ENCODE measurements at regions of chr14 and their contacts with region 1.

Region 1: DNA sequence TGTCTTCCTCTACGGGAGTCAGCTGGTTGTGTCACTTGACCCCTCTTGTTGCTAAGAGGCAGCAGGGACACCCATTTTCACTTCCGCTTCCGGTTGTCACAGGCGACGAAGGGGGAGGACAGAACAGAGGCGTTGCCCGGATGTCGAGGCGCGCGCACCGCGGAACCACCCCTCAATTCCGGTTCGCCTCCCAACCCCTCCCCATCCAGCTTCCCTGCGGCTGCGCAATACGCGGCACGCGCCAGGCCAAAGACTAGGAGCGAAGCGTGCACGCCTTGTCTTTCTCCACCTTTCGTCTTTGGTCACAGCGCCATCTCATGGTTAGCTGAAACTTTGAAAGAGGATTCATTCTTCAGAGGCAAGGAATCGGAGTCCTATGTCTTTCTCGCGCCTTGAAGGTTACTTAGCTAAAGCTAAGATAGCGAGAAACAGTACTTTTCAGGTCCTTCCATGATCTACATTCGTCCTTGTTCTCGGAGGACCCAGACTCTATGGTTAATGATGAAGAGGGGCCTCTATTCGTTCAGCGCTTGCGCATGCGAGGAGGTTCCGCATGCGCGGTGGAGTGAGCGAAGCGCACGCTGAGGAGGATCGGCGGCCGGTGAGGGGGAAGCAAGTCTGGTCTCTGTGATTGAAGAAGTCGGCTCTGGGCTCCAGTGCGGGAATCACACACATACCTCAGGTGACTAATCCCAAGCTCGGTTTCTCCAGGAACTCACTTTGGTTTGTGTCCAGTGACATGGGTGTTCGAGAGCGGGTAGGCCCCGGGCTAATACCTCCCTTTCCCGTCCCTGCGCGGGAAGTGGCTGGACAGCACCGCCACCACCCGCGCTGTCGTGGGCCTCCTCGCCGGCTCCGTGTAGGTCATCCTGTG is at the starts of genes ATP6V1D and EIF2S1:
- DNase-seq: peak; percentile 98
- H3K4me3 ChIP-seq: peak within 1 kb of the TSS; percentile 97
- H3K27ac ChIP-seq: peak within 1 kb of the TSS; percentile 99
- H3K27me3 ChIP-seq: no peaks in the 10 kb centered on the region
- CTCF ChIP-seq: peak; percentile 98
- polyA plus RNA-seq, gene ATP6V1D: 86.4 and 107 TPM in 2 replicates
- polyA plus RNA-seq, gene EIF2S1: 105 and 149 TPM in 2 replicates

Region 2: DNA sequence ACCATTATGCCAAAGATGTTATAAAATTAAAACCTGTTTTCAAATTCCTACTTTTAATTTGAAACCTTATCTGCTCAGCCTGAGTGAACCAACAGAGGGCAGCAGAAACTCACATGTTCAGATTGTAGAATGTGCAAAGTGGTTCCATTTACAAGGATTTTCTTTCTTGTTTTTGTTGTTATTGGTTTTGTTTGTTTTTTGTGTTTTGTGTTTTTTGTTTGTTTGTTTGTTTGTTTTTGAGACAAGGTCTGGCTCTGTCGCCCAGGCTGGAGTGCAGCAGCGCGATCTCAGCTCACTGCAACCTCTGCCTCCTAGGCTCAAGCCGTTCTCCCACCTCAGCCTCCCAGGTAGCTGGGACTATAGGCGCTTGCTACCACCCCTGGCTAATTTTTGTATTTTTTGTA is 193.6 kb before region 1 on chr14:
- CTCF ChIA-PET with region 1: interaction called, 24 read pairs
- POLR2A ChIA-PET with region 1: no interaction called
- DNase-seq: peak; percentile 27
- H3K4me3 ChIP-seq: no peak overlapping the region
- H3K27ac ChIP-seq: no peak overlapping the region
- H3K27me3 ChIP-seq: no peaks in the 10 kb centered on the region
- CTCF ChIP-seq: peak; percentile 89

Region 3: DNA sequence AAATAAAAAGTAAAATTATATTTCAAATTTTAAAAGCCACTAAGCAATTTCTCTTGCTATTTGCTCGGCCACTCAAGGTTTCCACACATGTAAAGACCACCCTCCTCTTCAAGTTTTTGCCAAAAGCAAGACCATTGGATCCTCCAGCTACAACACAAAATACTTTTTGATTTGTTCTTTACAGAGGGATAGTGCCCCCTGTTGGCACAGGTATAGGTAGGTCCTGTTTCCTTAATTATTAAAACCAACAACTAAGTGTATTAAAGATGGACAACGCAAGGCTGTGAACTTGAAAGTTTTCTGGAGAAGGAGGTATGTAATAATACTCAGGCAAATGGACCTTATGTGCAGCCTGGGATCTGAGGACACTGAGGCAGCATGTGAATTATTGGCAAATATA is 24.2 kb before region 1 on chr14:
- CTCF ChIA-PET with region 1: interaction called, 24 read pairs
- POLR2A ChIA-PET with region 1: interaction called, 3 read pairs
- DNase-seq: no peak
- H3K4me3 ChIP-seq: no peak overlapping the region
- H3K27ac ChIP-seq: no peak overlapping the region
- H3K27me3 ChIP-seq: no peaks in the 10 kb centered on the region
- CTCF ChIP-seq: peak; percentile 48

Region 4: DNA sequence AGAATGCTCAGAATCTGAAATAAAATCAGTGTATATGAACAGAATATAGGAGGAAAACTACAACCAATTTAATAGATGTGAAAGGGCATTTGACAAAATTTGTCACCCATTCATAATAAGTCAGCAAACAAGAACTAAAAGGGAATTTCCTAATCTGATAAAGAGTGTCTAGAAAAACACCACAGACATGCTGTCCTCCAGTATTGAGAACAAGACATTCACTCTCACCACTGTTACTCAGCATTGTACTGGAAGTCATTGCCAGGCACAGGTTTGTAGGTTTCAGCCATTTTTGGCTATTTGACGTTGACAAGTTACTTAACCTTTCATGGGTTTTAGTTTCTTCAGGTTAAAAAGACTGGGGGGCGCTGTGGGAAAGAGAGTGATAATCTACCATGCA is 13.3 kb after region 1 on chr14:
- CTCF ChIA-PET with region 1: interaction called, 27 read pairs
- POLR2A ChIA-PET with region 1: no interaction called
- DNase-seq: no peak
- H3K4me3 ChIP-seq: no peak overlapping the region
- H3K27ac ChIP-seq: no peak overlapping the region
- H3K27me3 ChIP-seq: no peaks in the 10 kb centered on the region
- CTCF ChIP-seq: no peak

Region 5: DNA sequence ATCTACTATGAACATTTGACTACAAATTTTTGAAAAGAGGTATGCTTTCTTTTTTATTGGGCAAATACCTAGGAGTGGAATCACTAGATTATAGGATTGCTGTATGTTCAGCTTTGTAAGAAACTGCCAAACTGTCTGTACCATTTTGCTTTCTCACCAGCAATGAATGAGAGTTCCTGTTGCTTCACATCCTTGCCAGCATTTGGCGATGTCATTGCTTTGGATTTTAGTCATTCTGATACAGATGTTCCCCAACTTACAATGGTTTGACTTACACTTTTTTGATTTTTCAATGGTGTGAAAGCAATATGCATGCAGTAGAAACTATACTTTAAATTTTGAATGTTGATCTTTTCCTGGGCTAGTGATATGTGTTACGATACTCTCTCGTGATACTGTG is 788.3 kb after region 1 on chr14:
- CTCF ChIA-PET with region 1: no interaction called
- POLR2A ChIA-PET with region 1: interaction called, 11 read pairs
- DNase-seq: no peak
- H3K4me3 ChIP-seq: no peak overlapping the region
- H3K27ac ChIP-seq: no peak overlapping the region
- H3K27me3 ChIP-seq: no peaks in the 10 kb centered on the region
- CTCF ChIP-seq: no peak